ENCODE measurements at regions of chr1 and their contacts with region 1.

Region 1: GRCh38 chr1:154241703-154242351 is 21.1 kb downstream of the UBAP2L start:
- DNase-seq: no peak
- ATAC-seq: no peak
- H3K4me3 ChIP-seq: no peak overlapping the region
- H3K27ac ChIP-seq: no peak overlapping the region
- H3K4me1 ChIP-seq: no peaks in the 10 kb centered on the region
- H3K27me3 ChIP-seq: no peaks in the 10 kb centered on the region
- CTCF ChIP-seq: no peak
- EP300 ChIP-seq: no peak
- POLR2A ChIP-seq: no peak
- RAD21 ChIP-seq: no peak

Region 2: DNA sequence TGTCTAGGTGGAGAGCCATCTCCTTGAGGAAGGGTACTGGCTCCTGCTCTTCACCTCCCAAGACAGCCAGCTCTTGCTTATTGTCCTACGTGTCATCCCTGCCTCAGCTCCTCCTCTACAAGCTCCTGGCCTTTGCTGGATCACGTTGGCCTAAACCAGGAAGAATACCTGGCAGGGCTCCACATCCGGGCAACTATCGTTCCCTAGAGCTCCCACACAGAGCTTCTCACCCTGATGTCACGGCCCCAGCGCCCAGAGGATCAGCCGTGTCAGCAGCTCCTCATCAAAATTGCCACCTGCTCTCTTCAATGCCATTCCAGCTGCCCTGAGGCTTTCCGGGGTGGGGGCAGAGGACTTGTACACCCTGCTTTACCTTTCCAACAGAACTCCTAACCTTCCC is 48.0 kb before region 1 on chr1:
- CTCF ChIA-PET with region 1: no interaction called
- POLR2A ChIA-PET with region 1: no interaction called
- in situ Hi-C with region 1: loop called (anchors 5 kb)
- intact Hi-C with region 1: no loop called
- DNase-seq: no peak
- ATAC-seq: peak; percentile 28
- H3K4me3 ChIP-seq: no peak overlapping the region
- H3K27ac ChIP-seq: no peak overlapping the region
- H3K4me1 ChIP-seq: peaks cover 8 to 21% of the 10 kb centered on the region in 2 experiments; a peak in 4 of 5 replicates
- H3K27me3 ChIP-seq: no peaks in the 10 kb centered on the region
- CTCF ChIP-seq: no peak
- EP300 ChIP-seq: no peak
- POLR2A ChIP-seq: no peak
- RAD21 ChIP-seq: no peak